ENCODE measurements at regions of chr1 and their contacts with region 1.

Region 1: DNA sequence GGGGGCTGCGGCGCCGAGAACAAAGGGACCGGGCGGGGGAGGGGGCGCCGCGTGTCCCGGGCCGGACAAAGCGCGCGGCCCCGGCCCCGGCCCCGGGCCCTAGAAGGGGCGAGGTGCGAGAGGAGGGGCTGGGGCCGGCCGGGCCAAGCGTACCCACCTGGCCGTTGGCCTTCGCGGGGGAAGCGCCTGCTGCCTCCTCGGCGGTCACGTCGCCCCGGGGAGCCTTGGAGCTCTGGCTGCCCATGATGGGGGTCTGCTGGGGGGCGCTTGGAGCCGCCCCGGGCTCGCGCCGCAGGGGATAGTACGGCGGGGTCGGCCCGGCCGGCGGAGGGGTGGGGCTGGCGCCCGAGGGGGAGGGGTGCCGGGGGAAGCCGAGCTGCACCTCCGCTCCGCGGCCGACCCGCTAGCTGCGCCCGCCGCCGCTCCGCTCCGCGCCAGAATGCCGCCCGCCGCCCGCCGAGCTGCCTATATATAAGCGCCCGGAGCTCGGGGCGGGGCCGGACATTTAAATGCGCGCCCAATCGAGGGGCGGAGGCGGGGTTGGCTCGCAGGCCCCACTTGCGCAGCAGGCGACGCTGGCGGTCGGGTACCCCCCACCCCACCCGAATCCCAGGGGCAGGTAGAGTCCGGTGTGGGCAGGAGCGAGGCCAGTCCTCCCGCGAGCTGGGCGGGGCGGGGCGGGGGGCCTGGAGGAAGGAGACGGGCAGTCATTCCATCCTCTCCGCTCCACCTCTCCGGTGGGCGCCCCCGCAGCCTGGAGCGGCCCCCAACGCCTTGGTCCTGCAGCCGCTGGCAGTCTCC is at the start of gene MARCKSL1:
- DNase-seq: peak; percentile 85
- ATAC-seq: peak; percentile 66
- H3K4me3 Mint-ChIP-seq: peak within 1 kb of the TSS; percentile 81
- H3K27ac Mint-ChIP-seq: peak within 1 kb of the TSS; percentile 53
- H3K4me1 Mint-ChIP-seq: peaks cover 40% of the 10 kb centered on the region
- H3K27me3 Mint-ChIP-seq: peaks cover 3% of the 10 kb centered on the region
- total RNA-seq, gene MARCKSL1: 23.1 to 26.1 TPM

Region 2: DNA sequence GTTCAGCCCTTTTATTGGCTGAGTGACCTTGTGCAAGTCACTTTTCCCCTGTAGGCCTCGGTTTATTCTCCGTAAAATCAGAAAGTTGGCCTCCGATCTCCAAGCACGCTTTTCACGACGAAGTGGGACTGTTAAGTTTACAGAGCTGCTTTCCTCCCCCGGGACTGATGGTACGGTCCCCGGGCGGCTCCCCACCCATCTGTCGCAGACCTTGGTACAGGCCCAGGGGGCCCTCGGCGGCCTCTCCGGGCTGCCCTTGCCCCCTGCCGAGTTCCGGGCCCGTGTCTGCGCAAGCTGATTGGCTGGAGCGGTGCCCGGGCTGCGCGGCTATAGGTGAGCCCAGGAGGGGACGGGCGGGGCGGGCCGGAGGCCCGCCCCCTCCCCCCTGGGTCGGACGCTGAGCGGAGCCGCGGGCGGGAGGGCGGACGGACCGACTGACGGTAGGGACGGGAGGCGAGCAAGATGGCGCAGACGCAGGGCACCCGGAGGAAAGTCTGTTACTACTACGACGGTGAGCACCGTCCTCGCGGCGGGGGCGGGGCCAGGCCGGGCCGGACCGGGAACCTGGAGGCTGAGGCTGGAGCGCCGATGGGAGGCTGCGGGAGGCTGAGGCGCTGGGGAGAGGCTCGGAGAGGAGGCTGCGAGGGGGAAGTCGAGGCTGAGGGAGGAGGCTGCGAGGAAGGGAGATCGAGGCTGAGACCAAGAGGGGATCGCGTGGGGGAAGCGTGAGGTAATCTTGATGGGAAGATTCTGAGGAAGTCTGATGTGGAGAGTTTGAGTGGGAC is 44.1 kb before region 1 on chr1 and contains the start of gene HDAC1:
- CTCF ChIA-PET with region 1: interaction called, 4 read pairs
- POLR2A ChIA-PET with region 1: interaction called, 11 read pairs
- DNase-seq: peak; percentile 98
- ATAC-seq: peak; percentile 99
- H3K4me3 Mint-ChIP-seq: peak within 1 kb of the TSS; percentile 100
- H3K27ac Mint-ChIP-seq: peak within 1 kb of the TSS; percentile 98
- H3K4me1 Mint-ChIP-seq: peaks cover 57% of the 10 kb centered on the region
- H3K27me3 Mint-ChIP-seq: no peaks in the 10 kb centered on the region
- total RNA-seq, gene HDAC1: 219 to 227 TPM

Region 3: DNA sequence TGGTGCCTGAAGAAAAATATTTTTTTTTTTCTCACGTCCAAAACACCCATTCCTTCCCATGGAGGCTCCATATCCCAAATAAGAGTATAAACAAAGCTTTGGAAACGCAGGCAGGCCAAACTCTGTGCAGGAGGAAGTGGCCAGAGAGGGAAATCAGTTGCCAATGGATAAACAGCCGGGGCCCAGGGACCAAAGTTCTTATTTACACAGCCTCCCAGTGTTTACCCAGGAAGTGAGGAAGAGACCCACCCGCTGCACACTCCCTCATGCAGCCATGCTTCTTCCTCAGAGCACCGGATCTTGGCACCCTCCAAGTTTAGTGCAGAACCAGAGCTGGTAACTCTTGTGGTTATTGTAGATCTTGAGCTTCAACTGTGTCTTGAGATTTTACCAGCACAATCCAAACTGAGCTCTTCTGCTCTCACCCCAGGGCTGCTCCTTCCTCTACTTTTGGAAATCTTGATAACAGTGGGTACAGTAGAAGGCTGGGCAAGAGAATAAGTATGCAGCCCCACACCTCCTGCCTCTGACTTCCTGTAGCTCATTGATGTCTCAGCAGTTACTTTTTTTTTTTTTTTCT is 14.2 kb before region 1 on chr1:
- CTCF ChIA-PET with region 1: interaction called, 3 read pairs
- POLR2A ChIA-PET with region 1: interaction called, 14 read pairs
- DNase-seq: peak; percentile 51
- ATAC-seq: peak; percentile 83
- H3K4me3 Mint-ChIP-seq: peak overlapping the region; percentile 40
- H3K27ac Mint-ChIP-seq: peak overlapping the region; percentile 84
- H3K4me1 Mint-ChIP-seq: peaks cover 43% of the 10 kb centered on the region
- H3K27me3 Mint-ChIP-seq: no peaks in the 10 kb centered on the region

Region 4: DNA sequence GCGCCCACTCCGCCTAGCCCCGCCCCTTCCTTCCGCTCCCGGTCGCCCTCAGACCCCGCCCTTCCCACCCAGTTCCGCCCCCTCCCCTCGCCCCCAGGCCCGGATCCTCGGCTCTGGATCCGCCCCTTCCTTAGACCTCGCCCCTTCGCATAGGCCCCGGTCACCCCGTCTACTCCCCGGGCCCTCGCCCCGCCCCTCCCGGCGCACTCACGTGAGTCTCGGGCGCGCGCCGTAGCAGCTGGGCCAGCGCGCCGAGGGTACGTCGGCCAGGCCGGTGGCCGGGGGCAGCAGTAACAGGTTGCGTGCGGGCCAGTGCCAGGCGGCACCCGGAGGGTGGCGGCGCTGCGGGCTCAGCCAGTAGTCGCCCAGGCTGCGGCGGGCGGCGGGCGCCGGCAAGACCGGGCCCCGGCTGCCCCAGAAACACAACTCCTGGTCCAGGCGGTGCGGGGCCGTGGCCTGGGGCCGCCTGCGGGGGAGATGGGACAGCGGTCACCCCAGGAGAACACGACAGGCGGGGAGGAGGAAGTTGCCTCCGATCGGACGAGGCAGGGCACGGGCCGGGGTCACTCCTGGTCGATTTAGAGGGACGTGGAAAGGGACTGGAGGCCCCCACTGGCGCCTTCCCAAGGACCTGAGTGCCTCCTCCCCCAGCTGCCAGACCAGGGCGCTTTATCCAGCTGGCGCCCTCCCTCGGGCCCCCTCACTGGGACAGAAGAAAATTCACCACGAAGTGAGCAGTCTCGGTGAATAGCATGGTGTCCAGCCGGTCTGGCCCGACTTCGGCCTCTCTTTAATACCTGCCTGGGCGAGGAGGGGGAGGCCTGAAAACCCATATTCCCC is 15.6 kb after region 1 on chr1:
- CTCF ChIA-PET with region 1: interaction called, 21 read pairs
- POLR2A ChIA-PET with region 1: interaction called, 7 read pairs
- DNase-seq: peak; percentile 92
- ATAC-seq: peak; percentile 93
- H3K4me3 Mint-ChIP-seq: peak overlapping the region; percentile 76
- H3K27ac Mint-ChIP-seq: peak overlapping the region; percentile 71
- H3K4me1 Mint-ChIP-seq: peaks cover 50% of the 10 kb centered on the region
- H3K27me3 Mint-ChIP-seq: peaks cover 2% of the 10 kb centered on the region

Region 5: GRCh38 chr1:32394141-32394889 is 58.3 kb after region 1 on chr1 and contains the start of gene BSDC1:
- CTCF ChIA-PET with region 1: interaction called, 7 read pairs
- POLR2A ChIA-PET with region 1: interaction called, 15 read pairs
- DNase-seq: peak; percentile 99
- ATAC-seq: peak; percentile 99
- H3K4me3 Mint-ChIP-seq: peak within 1 kb of the TSS; percentile 91
- H3K27ac Mint-ChIP-seq: peak within 1 kb of the TSS; percentile 93
- H3K4me1 Mint-ChIP-seq: peaks cover 25% of the 10 kb centered on the region
- H3K27me3 Mint-ChIP-seq: peaks cover 4% of the 10 kb centered on the region
- total RNA-seq, gene BSDC1: 37.3 to 38.5 TPM

Region 6: DNA sequence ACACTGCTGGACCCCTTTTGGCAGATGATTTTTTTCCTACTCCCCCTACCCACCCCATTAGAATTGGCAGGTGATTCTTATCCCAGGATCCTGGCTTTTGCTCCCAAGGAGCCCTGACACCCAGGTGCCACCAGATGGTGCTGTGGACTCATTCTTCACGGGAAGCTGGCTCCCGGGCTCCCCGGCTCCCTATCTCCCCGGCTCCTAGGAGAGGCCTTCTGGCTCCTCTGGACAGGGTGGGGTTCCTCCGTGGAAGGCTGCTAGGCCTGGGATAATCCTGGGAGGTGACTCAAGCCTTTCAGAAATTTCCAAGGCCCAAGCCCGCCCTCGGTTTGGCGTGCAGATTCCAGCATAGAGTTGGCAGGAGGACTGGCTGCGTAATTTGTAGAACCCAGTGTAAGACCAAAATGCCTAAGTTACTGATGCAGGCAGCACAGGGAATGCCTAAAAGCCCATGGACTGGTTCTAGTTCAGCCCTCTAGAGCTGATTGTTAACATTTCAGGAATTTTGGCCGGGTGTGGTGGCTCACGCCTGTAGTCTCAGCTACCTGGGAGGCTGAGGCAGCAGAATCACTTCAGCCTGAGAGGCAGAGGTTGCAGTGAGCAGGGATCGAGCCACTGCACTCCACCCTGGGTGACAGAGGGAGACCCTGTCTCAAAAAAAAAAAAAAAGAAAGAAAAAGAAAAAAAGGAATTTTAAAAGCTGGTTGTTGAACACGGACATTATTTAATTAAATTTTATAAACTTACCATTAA is 65.1 kb after region 1 on chr1:
- CTCF ChIA-PET with region 1: interaction called, 10 read pairs
- POLR2A ChIA-PET with region 1: interaction called, 3 read pairs
- DNase-seq: peak; percentile 63
- ATAC-seq: peak; percentile 90
- H3K4me3 Mint-ChIP-seq: no peak overlapping the region
- H3K27ac Mint-ChIP-seq: no peak overlapping the region
- H3K4me1 Mint-ChIP-seq: peaks cover 1% of the 10 kb centered on the region
- H3K27me3 Mint-ChIP-seq: peaks cover 4% of the 10 kb centered on the region